Heart left ventricle (tissue), 16 donors: ENCODE measurements at regions of chr21 and their contacts with region 1.

Region 1: GRCh38 chr21:35204850-35205541 is 155.9 kb upstream of the RUNX1 start:
- DNase-seq: peak; percentile 85 to 91 (median 87)
- ATAC-seq: peak; percentile 39 to 83 (median 73)
- H3K4me3 ChIP-seq: peak overlapping the region in 8 of 12 donors; percentile 14 to 43 (median 18)
- H3K27ac ChIP-seq: peak overlapping the region; percentile 1 to 80 (median 71)
- H3K4me1 ChIP-seq: peaks cover 0 to 69% (median 48%) of the 10 kb centered on the region in 12 donors
- H3K27me3 ChIP-seq: no peaks in the 10 kb centered on the region
- CTCF ChIP-seq: no peak
- POLR2A ChIP-seq: no peak

Region 2: DNA sequence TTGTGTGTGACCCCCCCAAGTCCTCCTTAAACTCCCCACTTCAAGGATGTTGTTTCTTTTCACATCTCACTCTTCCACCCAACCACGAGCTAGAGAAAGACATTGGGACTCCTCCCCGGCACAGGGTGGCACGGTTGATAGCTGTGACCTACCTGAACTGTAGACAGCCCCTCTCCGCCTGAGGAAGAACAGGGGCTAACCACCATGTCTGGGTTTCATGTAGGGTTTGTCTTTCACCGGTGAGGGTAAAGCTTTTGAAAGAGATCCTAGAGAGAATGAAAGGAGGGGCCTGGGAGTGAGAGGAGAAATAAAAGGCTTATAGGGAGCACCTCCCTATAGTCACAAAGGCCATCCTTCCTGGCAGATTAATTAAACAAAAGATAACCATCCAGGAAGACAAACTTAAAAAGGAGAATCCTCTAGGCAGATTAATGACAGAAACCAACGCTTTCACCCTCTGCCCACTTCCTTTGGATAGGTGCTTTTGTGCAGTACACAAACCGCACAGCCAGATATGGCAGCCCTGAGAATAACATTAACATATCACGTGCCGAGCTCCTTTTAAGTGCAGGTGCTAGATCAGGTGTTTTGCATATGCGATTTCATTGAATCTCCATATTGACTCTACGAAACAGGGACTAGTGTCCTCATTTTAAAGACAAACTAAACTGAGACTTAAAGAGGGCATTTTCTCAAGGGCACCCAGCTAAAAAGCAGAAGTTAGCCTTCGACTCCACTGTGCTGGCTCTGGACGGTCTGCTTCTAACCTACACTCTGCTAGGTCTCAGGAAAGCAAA is 22.1 kb after region 1 on chr21:
- intact Hi-C with region 1: no loop called
- DNase-seq: no peak
- ATAC-seq: no peak
- H3K4me3 ChIP-seq: no peak overlapping the region
- H3K27ac ChIP-seq: peak overlapping the region in 1 of 12 donors; percentile 56
- H3K4me1 ChIP-seq: peaks cover 0 to 37% (median 13%) of the 10 kb centered on the region in 12 donors
- H3K27me3 ChIP-seq: no peaks in the 10 kb centered on the region
- CTCF ChIP-seq: no peak
- POLR2A ChIP-seq: no peak

Region 3: GRCh38 chr21:35244514-35244913 is 39.5 kb after region 1 on chr21:
- intact Hi-C with region 1: loop called in 1 of 10 experiments (anchors 2 kb)
- DNase-seq: no peak
- ATAC-seq: no peak
- H3K4me3 ChIP-seq: no peak overlapping the region
- H3K27ac ChIP-seq: no peak overlapping the region
- H3K4me1 ChIP-seq: peaks cover 0 to 15% (median 0%) of the 10 kb centered on the region in 12 donors
- H3K27me3 ChIP-seq: no peaks in the 10 kb centered on the region
- CTCF ChIP-seq: no peak
- POLR2A ChIP-seq: no peak